Activated naive CD8-positive, alpha-beta T cell treated with anti-CD3 and anti-CD28 coated beads, Interleukin-2, amount 10 ng/mL, durations not matched to agents 7 days and 5 days (primary cell): ENCODE measurements at regions of chr10 and their contacts with region 1.

Region 1: GRCh38 chr10:70363971-70364771 is 18.3 kb downstream of the LRRC20 start:
- DNase-seq: peak; percentile 86
- ATAC-seq: peak; percentile 96
- H3K4me3 Mint-ChIP-seq: peak overlapping the region; percentile 44
- H3K27ac Mint-ChIP-seq: peak overlapping the region; percentile 70
- H3K4me1 Mint-ChIP-seq: peaks cover 12% of the 10 kb centered on the region
- H3K27me3 Mint-ChIP-seq: no peaks in the 10 kb centered on the region

Region 2: DNA sequence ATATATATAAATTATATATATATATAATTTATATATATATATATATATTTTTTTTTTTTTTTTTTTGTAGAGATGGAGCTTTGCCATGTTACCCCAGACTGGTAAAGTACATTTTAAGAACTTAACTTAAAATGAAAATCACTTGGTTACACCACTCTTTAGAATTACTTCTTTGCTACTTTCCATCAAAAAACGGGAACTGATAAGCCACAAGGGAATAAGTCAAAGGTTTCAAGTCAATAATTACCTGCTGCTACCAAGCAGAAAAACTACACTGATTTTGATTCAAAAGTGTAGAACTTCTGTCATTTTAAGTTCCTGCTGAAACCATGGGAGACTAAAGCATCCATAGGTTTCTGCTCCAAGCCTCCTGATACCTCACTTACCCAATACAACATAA is 143.1 kb before region 1 on chr10:
- POLR2A ChIA-PET with region 1: interaction called, 23 read pairs
- DNase-seq: no peak
- ATAC-seq: no peak
- H3K4me3 Mint-ChIP-seq: peak overlapping the region; percentile 73
- H3K27ac Mint-ChIP-seq: peak overlapping the region; percentile 69
- H3K4me1 Mint-ChIP-seq: peaks cover 19% of the 10 kb centered on the region
- H3K27me3 Mint-ChIP-seq: no peaks in the 10 kb centered on the region

Region 3: DNA sequence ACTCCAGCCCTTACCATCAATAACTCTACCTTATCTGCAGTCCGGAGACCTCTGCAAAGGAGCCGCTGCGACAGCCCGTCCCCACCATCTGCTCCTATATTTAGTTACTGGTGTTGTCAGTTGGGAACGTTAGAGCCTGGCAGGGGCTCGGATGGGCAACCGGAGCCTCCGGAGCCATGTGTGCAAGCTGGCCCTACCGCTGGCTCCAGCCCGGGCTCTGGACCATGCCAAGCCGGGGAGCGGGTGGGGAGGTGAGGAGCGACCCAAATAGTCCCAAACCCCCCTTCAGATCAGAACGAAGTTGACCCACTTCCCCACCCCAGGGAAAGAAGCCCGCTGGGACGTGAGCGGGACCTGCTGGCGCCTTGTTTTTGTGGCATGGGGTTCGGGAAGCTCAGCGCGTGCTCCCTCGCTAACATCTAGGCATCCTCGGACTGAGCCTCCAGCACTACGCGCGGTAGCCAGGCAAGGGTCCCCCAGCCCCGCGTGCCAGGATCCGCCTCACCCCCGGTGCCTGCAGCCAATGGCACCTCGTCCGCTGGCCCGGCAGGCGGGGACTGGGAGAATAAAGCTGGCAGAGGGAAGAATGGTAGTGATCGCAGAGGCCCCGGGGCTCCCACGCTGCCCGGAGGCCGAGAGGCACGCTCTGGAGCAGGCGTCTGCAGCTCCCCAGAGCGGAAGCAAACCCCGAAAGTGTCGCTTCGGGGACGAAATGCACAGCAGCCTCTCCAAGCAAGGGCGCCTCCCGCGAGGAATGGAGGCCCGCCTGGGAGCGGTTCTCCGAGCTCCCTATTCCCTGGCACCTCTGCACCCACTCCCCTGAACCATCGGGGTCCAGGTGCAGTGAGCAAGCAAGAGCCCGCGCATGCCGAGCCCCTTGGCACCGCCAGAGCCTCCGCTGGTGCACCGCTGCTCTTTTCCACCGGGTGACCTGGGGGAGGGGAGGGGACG is 17.6 kb after region 1 on chr10:
- POLR2A ChIA-PET with region 1: no interaction called
- DNase-seq: peak; percentile 72
- ATAC-seq: peak; percentile 43
- H3K4me3 Mint-ChIP-seq: peak overlapping the region; percentile 89
- H3K27ac Mint-ChIP-seq: peak overlapping the region; percentile 70
- H3K4me1 Mint-ChIP-seq: peaks cover 14% of the 10 kb centered on the region
- H3K27me3 Mint-ChIP-seq: peaks cover 25% of the 10 kb centered on the region